Heart right ventricle (tissue), 16 donors: ENCODE measurements at regions of chr2 and their contacts with region 1.

Region 1: GRCh38 chr2:236180831-236181453 is 12.8 kb upstream of the GBX2 start:
- DNase-seq: peak in 1 of 2 donors; percentile 54
- ATAC-seq: peak in 4 of 8 donors; percentile 32 to 50 (median 34)
- H3K4me3 ChIP-seq: no peak overlapping the region
- H3K27ac ChIP-seq: no peak overlapping the region
- H3K4me1 ChIP-seq: peaks cover 8 to 33% (median 25%) of the 10 kb centered on the region in 9 donors
- H3K27me3 ChIP-seq: peaks cover 32 to 69% (median 61%) of the 10 kb centered on the region in 7 donors
- CTCF ChIP-seq: peak; percentile 53 to 85 (median 74)

Region 2: GRCh38 chr2:235766278-235766677 is 414.7 kb before region 1 on chr2:
- intact Hi-C with region 1: loop called in 6 of 10 experiments (anchors 2 to 5 kb)
- DNase-seq: peak in 1 of 2 donors; percentile 83
- ATAC-seq: peak; percentile 86 to 94 (median 88)
- H3K4me3 ChIP-seq: no peak overlapping the region
- H3K27ac ChIP-seq: no peak overlapping the region
- H3K4me1 ChIP-seq: peaks cover 0 to 5% (median 0%) of the 10 kb centered on the region in 9 donors
- H3K27me3 ChIP-seq: no peaks in the 10 kb centered on the region
- CTCF ChIP-seq: peak; percentile 85 to 97 (median 93)

Region 3: GRCh38 chr2:235802538-235803427 is 378.2 kb before region 1 on chr2:
- intact Hi-C with region 1: loop called in 1 of 10 experiments (anchors 10 kb)
- DNase-seq: no peak
- ATAC-seq: no peak
- H3K4me3 ChIP-seq: no peak overlapping the region
- H3K27ac ChIP-seq: no peak overlapping the region
- H3K4me1 ChIP-seq: no peaks in the 10 kb centered on the region
- H3K27me3 ChIP-seq: no peaks in the 10 kb centered on the region
- CTCF ChIP-seq: peak in 4 of 9 donors; percentile 31 to 42 (median 39)

Region 4: DNA sequence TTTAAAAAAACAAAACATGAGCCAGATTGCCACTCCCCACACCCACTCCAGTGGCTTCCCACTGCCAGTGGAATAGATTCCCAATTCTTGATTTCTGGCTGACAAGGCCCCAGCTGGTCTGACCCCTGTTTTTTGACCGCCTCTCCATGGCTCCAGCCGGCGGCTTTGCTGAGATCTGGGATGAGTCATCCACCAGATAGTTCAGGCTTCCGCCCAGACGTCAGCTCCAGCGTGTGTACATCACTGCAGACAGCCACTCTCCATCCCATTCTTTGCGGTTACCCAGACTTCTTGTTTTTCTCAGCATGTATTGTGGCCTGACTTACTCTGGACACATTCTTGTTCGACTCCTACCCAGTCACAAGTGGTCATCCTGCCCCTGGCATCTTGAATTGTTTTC is 240.6 kb before region 1 on chr2:
- intact Hi-C with region 1: no loop called
- DNase-seq: peak; percentile 26 to 33
- ATAC-seq: peak; percentile 64 to 93 (median 82)
- H3K4me3 ChIP-seq: no peak overlapping the region
- H3K27ac ChIP-seq: peak overlapping the region in 2 of 10 donors; percentile 12 to 56
- H3K4me1 ChIP-seq: peaks cover 0 to 6% (median 0%) of the 10 kb centered on the region in 9 donors
- H3K27me3 ChIP-seq: no peaks in the 10 kb centered on the region
- CTCF ChIP-seq: no peak

Region 5: DNA sequence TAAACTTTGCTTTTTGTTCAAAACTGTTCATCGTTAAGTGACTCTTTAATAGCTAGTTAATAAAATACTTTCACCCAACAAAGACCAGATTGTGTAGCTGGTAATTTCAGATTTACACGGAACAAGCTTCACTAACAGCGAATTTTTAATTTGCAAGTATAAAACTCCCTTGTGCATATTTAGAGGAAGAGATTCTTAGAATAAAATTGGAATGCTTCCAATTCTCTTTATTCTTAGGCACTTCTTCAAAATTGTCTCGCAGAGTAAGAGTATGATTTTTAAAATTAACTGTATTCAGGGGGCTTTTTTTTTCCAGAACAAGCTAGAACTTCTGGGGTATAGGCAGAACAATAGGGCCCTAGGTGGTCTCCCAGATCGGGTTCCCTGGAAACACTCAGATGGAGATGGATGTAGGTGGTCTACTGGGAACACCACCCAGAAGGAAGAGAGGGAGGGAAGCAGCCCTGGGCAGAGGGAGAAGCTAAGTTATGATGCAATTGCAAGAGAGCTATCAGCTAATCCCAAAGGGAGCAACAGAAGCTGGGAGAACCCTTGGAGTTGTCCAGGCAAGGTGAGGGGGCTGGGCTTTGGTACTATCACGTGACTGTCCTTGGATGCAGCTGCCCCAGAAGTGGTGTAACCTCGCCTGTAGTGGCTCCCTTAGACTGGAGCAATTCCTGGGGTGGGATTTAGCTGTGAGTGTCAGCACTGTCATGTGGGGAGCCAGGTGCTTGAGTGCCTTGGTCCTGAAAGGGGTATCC is 234.9 kb after region 1 on chr2:
- intact Hi-C with region 1: no loop called
- DNase-seq: no peak
- ATAC-seq: no peak
- H3K4me3 ChIP-seq: no peak overlapping the region
- H3K27ac ChIP-seq: no peak overlapping the region
- H3K4me1 ChIP-seq: no peaks in the 10 kb centered on the region
- H3K27me3 ChIP-seq: peaks cover 0 to 15% (median 0%) of the 10 kb centered on the region in 7 donors
- CTCF ChIP-seq: no peak